ENCODE measurements at regions of chr10 and their contacts with region 1.

Region 1: GRCh38 chr10:76778914-76779795 is 858.5 kb downstream of the KCNMA1 start:
- DNase-seq: no peak

Region 2: GRCh38 chr10:76444034-76444800 is 334.9 kb before region 1 on chr10:
- intact Hi-C with region 1: loop called (anchors 5 kb)
- DNase-seq: no peak